A673 (cell line): ENCODE measurements at regions of chr11 and their contacts with region 1.

Region 1: DNA sequence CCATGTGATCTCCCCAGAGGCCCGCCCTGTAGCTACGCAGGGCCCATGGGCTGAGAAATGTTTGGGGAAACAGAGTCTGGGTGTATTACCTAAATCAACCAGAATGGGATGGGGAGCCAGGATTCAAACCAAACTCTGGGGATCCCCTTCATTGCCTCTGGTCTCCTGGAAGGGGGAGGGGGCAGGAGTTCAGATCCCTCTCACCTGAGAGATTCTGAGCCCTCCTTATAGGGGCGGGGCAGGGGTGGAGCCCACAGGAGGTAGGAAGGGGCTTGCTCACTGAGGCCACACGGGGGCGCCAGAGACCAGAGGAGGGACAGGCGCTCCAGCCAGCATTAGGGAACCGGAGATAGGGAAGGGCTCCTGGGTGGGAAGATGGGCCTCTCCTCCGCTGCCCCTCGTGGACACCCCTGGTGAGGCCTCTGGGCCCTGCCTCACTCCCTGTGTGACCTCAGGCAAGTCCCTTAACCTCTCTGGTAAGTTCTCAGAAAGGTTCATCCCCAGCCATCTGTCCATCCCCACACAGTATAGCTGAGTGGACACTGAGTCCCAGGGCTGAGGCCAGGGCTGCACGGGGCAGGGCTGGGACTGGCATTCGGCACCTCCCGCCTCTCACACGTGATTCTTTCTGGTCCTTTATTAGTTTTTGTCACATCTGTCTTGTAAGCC is 2.7 kb upstream of the CDC42BPG start:
- DNase-seq: peak; percentile 98
- H3K4me3 ChIP-seq: no peak overlapping the region
- H3K27ac ChIP-seq: no peak overlapping the region
- H3K4me1 ChIP-seq: peaks cover 13% of the 10 kb centered on the region
- H3K27me3 ChIP-seq: no peaks in the 10 kb centered on the region
- CTCF ChIP-seq: peak; percentile 98

Region 2: GRCh38 chr11:64752175-64752970 is 94.8 kb before region 1 on chr11:
- CTCF ChIA-PET with region 1: no interaction called
- POLR2A ChIA-PET with region 1: no interaction called
- intact Hi-C with region 1: no loop called
- DNase-seq: no peak
- H3K4me3 ChIP-seq: no peak overlapping the region
- H3K27ac ChIP-seq: no peak overlapping the region
- H3K4me1 ChIP-seq: no peaks in the 10 kb centered on the region
- H3K27me3 ChIP-seq: no peaks in the 10 kb centered on the region
- CTCF ChIP-seq: no peak

Region 3: DNA sequence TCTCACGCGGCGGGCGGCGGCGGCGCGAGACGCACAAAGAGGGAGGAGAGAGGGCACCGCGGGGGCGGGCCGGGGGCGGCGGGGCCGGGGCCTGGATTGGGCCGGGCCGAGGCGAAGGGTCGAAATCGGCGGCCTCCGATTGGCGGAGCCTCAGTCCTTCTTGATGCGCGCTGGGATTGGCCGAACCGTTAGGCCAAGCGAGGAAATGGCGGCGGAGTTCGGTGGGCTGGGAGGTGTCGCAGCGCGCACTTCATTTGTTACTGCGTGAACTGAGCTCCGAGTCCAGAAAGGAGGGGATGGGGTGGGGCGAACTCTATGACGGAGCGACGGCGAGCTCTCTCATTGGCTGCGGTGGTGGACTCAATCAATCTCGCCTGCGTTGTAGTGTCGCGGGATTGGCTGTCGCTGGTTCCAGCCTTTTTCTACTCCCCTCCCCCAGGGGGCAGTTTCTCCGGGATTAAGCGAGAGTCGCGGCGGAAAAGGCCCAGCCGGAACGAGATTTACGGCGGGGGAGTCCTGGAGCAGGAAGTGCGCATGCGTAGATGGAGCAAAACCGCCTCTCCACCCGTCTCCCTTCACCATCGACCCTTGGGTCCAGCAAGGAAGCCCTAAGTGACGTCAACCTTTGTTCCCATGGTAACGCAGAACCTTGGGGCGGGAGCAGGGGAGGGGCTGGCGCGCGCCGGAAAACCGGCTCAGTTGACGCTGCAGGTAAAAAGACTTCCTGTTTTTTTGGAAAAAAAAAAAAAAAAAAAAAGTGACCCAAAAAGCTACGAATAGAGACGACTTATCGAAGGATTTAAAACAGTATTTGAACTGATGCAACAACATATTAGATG is 68.4 kb before region 1 on chr11 and contains the start of gene SF1:
- CTCF ChIA-PET with region 1: no interaction called
- POLR2A ChIA-PET with region 1: no interaction called
- intact Hi-C with region 1: loop called (anchors 2 kb)
- DNase-seq: peak; percentile 100
- H3K4me3 ChIP-seq: peak within 1 kb of the TSS; percentile 80
- H3K27ac ChIP-seq: peak within 1 kb of the TSS; percentile 99
- H3K4me1 ChIP-seq: peaks cover 21% of the 10 kb centered on the region
- H3K27me3 ChIP-seq: no peaks in the 10 kb centered on the region
- CTCF ChIP-seq: 0 out of 2 replicates have a peak, but pooled peaks have one; percentile 10
- total RNA-seq, gene SF1: 467 and 472 TPM in 2 replicates

Region 4: GRCh38 chr11:64887757-64888405 is 40.7 kb after region 1 on chr11:
- CTCF ChIA-PET with region 1: interaction called, 14 read pairs
- POLR2A ChIA-PET with region 1: no interaction called
- intact Hi-C with region 1: no loop called
- DNase-seq: peak; percentile 81
- H3K4me3 ChIP-seq: no peak overlapping the region
- H3K27ac ChIP-seq: no peak overlapping the region
- H3K4me1 ChIP-seq: no peaks in the 10 kb centered on the region
- H3K27me3 ChIP-seq: no peaks in the 10 kb centered on the region
- CTCF ChIP-seq: peak; percentile 99

Region 5: DNA sequence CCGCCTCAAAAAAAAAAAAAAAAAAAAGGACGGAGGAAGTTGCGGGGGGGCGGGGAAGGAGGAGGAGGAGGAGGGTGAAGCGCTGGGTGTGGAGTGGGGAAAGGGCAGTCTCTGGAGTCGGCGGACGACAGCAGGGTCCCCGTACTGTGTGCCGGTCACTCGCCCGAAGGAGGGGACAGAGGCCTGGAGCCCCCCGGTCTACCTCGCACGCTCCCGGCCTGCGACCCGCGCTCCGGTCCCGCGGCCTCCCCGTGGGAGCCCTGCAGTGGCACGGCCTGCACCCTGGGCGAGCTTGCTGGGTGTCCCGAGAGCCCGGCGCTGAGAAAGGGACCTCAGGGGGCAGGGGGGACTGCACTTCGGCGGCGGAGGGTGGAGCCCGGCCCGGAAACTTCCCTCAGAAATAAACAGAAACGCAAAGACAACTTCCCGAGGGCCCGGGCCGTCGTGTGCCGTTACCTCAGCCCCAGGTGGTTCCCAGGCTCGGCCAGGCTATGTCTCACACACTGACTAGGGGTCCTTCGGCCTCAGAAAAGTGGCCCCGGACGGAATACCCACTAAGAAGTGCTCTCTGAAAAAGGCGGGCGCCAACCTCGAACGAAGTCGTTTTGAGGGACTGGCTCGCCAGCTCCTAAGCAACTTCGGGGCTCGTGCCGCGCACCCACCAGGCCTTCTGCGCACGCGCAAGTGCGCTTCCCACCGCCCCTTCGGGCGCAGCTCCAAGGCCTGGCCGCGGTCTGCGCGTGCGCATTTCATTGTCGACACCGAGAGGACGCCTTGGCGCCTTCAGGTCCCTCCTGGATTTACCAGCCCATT is 124.5 kb after region 1 on chr11 and contains the start of gene MAJIN:
- CTCF ChIA-PET with region 1: no interaction called
- POLR2A ChIA-PET with region 1: no interaction called
- intact Hi-C with region 1: no loop called
- DNase-seq: no peak
- H3K4me3 ChIP-seq: no peak within 1 kb of the TSS
- H3K27ac ChIP-seq: no peak within 1 kb of the TSS
- H3K4me1 ChIP-seq: no peaks in the 10 kb centered on the region
- H3K27me3 ChIP-seq: no peaks in the 10 kb centered on the region
- CTCF ChIP-seq: no peak
- total RNA-seq, gene MAJIN: not detected in 2 replicates

Region 6: GRCh38 chr11:65013692-65014145 is 166.6 kb after region 1 on chr11:
- CTCF ChIA-PET with region 1: no interaction called
- POLR2A ChIA-PET with region 1: no interaction called
- intact Hi-C with region 1: loop called (anchors 2 kb)
- DNase-seq: peak; percentile 97
- H3K4me3 ChIP-seq: peak overlapping the region; percentile 95
- H3K27ac ChIP-seq: peak overlapping the region; percentile 96
- H3K4me1 ChIP-seq: no peaks in the 10 kb centered on the region
- H3K27me3 ChIP-seq: no peaks in the 10 kb centered on the region
- CTCF ChIP-seq: peak; percentile 67

Region 7: GRCh38 chr11:65251476-65251875 is 404.3 kb after region 1 on chr11:
- CTCF ChIA-PET with region 1: interaction called, 5 read pairs
- POLR2A ChIA-PET with region 1: no interaction called
- intact Hi-C with region 1: loop called (anchors 10 kb)
- DNase-seq: no peak
- H3K4me3 ChIP-seq: no peak overlapping the region
- H3K27ac ChIP-seq: no peak overlapping the region
- H3K4me1 ChIP-seq: no peaks in the 10 kb centered on the region
- H3K27me3 ChIP-seq: no peaks in the 10 kb centered on the region
- CTCF ChIP-seq: no peak

Region 8: GRCh38 chr11:65329944-65330403 is 482.8 kb after region 1 on chr11:
- CTCF ChIA-PET with region 1: no interaction called
- POLR2A ChIA-PET with region 1: no interaction called
- intact Hi-C with region 1: loop called (anchors 5 kb)
- DNase-seq: peak; percentile 95
- H3K4me3 ChIP-seq: no peak overlapping the region
- H3K27ac ChIP-seq: peak overlapping the region; percentile 24
- H3K4me1 ChIP-seq: peaks cover 6% of the 10 kb centered on the region
- H3K27me3 ChIP-seq: no peaks in the 10 kb centered on the region
- CTCF ChIP-seq: peak; percentile 88